Adrenal gland (tissue), 19 donors: ENCODE measurements at regions of chr10 and their contacts with region 1.

Region 1: DNA sequence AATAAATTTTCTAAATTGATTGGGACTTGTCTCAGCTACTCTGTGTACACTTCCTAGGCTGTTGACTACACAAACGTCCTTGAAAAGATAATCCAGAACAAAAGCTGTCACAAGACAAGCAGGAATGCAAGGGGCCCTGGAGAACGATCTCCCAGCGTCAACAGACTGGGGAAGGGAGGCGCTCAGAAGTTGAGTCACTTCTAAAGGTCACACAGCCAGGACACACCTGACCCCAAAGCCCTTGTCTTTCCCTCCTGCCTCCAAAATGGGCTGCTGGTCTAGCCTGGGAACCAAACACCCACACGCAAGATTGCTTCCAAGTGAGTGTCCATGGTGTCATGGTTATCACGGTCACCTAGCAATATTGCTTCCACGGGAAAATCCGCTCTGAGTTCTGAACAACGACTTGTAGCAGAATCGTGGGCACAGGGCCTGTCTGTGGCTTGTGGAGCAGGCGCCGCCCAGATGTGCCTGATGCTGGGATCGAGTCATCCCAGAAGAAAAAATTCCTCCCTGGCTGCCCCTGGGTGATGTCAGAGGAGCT is 49.8 kb downstream of the SPOCK2 start:
- DNase-seq: peak in 6 of 7 donors; percentile 74 to 86 (median 83)
- H3K4me3 ChIP-seq: no peak overlapping the region
- H3K27ac ChIP-seq: peak overlapping the region in 4 of 5 donors; percentile 59 to 83 (median 68)
- H3K4me1 ChIP-seq: peaks cover 11 to 17% of the 10 kb centered on the region in 2 donors
- H3K27me3 ChIP-seq: no peaks in the 10 kb centered on the region
- CTCF ChIP-seq: no peak
- POLR2A ChIP-seq: no peak

Region 2: GRCh38 chr10:71999360-72000072 is 39.0 kb before region 1 on chr10:
- intact Hi-C with region 1: loop called in 1 of 2 experiments (anchors 5 kb)
- DNase-seq: peak in 6 of 7 donors; percentile 61 to 81 (median 71)
- H3K4me3 ChIP-seq: peak overlapping the region in 1 of 4 donors; percentile 7
- H3K27ac ChIP-seq: peak overlapping the region; percentile 73 to 90 (median 83)
- H3K4me1 ChIP-seq: peaks cover 55 to 65% of the 10 kb centered on the region in 2 donors
- H3K27me3 ChIP-seq: no peaks in the 10 kb centered on the region
- CTCF ChIP-seq: no peak
- POLR2A ChIP-seq: no peak

Region 3: GRCh38 chr10:72248468-72249151 is 210.1 kb after region 1 on chr10:
- intact Hi-C with region 1: no loop called
- DNase-seq: peak; percentile 79 to 96 (median 85)
- H3K4me3 ChIP-seq: peak overlapping the region in 1 of 4 donors; percentile 11
- H3K27ac ChIP-seq: peak overlapping the region; percentile 82 to 97 (median 93)
- H3K4me1 ChIP-seq: peaks cover 62 to 95% of the 10 kb centered on the region in 2 donors
- H3K27me3 ChIP-seq: no peaks in the 10 kb centered on the region
- CTCF ChIP-seq: peak in 1 of 6 experiments; percentile 5
- POLR2A ChIP-seq: peak; percentile 25 to 78

Region 4: GRCh38 chr10:72337020-72337629 is 298.6 kb after region 1 on chr10:
- intact Hi-C with region 1: no loop called
- DNase-seq: peak; percentile 88 to 95 (median 94)
- H3K4me3 ChIP-seq: no peak overlapping the region
- H3K27ac ChIP-seq: peak overlapping the region; percentile 73 to 100 (median 97)
- H3K4me1 ChIP-seq: peaks cover 39 to 63% of the 10 kb centered on the region in 2 donors
- H3K27me3 ChIP-seq: no peaks in the 10 kb centered on the region
- CTCF ChIP-seq: peak; percentile 96 to 98 (median 98)
- POLR2A ChIP-seq: no peak